ENCODE measurements at regions of chr3 and their contacts with region 1.

Region 1: DNA sequence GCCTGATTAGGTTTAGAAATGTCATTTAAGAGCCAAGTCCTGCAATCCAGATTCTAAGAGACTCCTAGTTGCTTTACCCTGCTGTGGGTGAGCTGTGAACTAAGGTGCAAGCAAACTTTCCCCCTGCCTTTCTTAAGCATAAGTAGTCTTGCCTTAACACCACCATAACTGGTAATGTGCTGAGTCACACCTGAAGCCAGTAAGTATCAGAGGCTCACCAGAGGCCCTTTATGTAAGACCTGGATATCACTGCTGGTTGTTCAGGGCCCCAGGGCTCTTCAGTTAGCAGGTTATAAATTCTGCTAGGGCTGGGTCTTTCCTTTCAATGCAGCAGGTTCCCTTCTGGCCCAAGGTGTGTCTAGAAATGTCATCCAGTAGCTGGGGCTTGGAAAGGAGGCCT is 509.9 kb downstream of the VGLL3 start:
- DNase-seq: no peak
- H3K4me3 ChIP-seq: no peak overlapping the region
- H3K27ac ChIP-seq: no peak overlapping the region
- H3K4me1 ChIP-seq: no peaks in the 10 kb centered on the region
- CTCF ChIP-seq: no peak

Region 2: DNA sequence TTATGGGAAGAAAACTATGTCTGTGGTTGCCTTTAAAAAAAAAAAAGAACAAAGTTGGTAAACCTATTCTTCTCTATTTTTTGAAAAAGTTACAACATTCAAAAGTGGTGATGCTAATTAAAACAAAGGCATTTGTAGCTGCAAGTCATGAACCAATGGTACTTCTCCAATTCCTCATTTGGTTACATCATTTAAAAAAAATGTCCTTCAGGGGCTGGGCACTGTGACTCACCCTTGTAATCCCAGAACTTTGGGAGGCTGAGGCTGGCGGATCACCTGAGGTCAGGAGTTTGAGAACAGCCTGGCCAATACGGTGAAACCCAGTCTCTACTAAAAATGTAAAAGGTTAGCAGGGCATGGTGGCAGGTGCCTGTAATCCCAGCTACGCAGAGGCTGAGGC is 64.7 kb before region 1 on chr3:
- CTCF ChIA-PET with region 1: no interaction called
- POLR2A ChIA-PET with region 1: no interaction called
- intact Hi-C with region 1: loop called (anchors 10 kb)
- DNase-seq: no peak
- H3K4me3 ChIP-seq: no peak overlapping the region
- H3K27ac ChIP-seq: no peak overlapping the region
- H3K4me1 ChIP-seq: no peaks in the 10 kb centered on the region
- CTCF ChIP-seq: no peak

Region 3: DNA sequence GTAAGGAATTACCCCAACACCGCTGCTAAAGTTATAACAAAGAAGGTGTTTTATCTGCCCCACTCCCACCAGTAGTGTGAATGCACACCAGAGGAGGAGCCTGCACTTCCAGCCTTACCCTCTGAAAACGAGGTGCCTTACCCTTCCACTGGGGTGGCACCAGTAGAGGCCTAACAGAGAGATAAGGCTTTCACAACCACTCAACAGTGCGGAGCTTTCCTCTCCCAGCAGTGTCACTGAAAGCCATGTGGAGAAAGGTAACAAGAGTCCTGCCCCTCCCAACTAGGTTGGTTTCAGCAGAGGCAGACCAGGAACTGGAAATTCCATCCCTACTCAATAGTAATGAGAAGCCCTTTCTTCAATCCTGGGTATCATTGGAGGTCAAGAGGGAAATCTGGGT is 29.3 kb before region 1 on chr3:
- CTCF ChIA-PET with region 1: no interaction called
- POLR2A ChIA-PET with region 1: no interaction called
- intact Hi-C with region 1: no loop called
- DNase-seq: no peak
- H3K4me3 ChIP-seq: no peak overlapping the region
- H3K27ac ChIP-seq: no peak overlapping the region
- H3K4me1 ChIP-seq: no peaks in the 10 kb centered on the region
- CTCF ChIP-seq: no peak